AG04449 (cell line): ENCODE measurements at regions of chr17 and their contacts with region 1.

Region 1: DNA sequence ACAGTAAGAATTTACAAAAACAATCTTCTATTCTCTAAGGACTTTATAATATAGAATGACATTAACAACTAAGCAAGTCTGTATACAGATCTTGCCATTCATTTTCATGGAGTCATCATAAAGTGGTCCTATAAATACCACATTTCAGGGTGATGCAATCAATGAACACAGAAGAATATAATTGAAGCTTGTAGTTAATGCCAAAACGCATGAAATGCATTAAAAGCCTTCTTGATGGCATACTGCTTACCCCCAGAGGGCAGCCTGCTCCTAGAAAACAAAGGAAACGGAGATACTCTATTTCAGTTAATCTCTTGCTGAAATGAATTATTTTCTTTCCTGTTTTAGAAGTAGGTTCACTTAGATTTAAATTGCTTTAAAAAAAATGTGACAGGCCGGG is 45.2 kb upstream of the STAC2 start:
- DNase-seq: peak; percentile 69
- H3K4me3 ChIP-seq: no peak overlapping the region
- CTCF ChIP-seq: peak; percentile 56

Region 2: GRCh38 chr17:39099663-39100286 is 171.1 kb before region 1 on chr17:
- CTCF ChIA-PET with region 1: no interaction called
- POLR2A ChIA-PET with region 1: no interaction called
- DNase-seq: no peak
- H3K4me3 ChIP-seq: no peak overlapping the region
- CTCF ChIP-seq: no peak

Region 3: GRCh38 chr17:39144416-39144840 is 126.5 kb before region 1 on chr17:
- CTCF ChIA-PET with region 1: no interaction called
- POLR2A ChIA-PET with region 1: no interaction called
- DNase-seq: no peak
- H3K4me3 ChIP-seq: no peak overlapping the region
- CTCF ChIP-seq: no peak

Region 4: DNA sequence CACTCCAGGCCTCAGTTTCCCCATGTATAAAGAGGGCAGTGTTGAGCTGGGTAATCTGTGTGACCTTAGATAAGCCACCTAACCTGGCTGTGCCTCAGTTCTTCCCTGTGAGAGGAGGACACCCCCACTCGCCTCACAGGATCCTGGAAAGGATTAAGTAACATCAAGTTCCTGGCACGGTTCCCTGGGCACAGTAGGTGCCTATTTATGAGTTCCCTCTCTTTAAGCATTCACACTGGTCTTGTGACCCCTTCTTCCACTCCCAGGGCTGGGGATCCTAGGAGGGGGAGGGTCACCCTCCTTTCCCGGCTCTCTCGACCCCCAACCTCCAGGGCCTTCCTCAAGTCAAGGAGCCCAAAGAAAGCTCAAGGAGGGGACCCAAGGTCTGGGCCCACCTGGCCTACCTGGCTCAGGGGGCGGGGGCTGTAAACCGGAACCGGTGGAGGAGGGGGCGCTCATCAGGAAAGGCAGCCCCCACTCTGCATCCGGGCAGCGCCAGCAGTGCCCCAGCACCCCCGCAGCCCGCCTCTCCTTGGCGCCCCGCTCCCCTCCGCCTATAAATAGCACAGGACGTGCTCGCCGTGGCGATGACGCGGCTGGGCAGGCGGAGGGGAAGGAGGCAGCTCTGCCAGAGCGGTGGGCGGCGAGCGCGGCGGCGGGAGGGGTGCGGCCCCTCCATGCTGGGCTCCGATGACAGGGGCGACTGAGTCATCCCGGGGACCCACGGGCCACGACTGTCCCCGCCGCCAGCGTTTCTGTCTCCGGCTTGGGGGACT is 61.4 kb before region 1 on chr17:
- CTCF ChIA-PET with region 1: no interaction called
- POLR2A ChIA-PET with region 1: no interaction called
- DNase-seq: no peak
- H3K4me3 ChIP-seq: peak overlapping the region; percentile 51
- CTCF ChIP-seq: no peak

Region 5: DNA sequence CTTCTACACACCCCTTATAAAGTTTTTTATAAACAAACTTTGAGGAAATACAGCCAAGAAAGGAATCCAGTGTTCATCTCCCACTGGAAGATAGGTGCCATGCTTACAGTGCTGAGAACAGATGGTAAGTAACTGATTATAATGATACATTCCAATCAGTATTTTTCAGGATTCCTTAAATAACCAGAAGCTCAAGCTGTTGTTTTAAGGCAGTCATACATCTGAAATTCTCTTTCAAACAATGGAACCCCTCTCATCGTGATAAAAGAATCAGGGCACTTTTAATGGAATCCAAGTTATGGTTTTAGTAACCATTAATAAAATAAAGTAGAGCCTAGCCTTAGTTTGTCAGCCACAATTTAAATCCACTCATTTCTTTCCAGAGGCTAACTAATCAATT is 10.9 kb after region 1 on chr17:
- CTCF ChIA-PET with region 1: interaction called, 25 read pairs
- POLR2A ChIA-PET with region 1: no interaction called
- DNase-seq: peak; percentile 16
- H3K4me3 ChIP-seq: no peak overlapping the region
- CTCF ChIP-seq: no peak

Region 6: DNA sequence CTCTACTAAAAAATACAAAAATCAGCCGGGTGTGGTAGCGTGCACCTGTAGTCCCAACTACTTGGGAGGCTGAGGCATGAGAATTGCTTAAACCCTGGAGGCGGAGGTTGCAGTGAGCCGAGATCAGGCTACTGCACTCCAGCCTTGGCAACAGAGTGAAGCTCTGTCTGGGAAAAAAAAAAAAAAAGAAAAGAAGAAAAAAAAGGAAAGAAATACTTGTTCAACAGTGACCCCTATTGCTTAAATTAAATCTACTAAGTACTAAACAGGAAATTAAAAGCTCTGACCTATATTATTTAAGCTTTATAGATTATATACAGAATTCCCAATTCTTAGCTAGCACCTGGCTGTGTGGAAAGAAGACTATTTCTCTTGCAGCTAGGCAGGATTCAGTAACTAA is 81.6 kb after region 1 on chr17:
- CTCF ChIA-PET with region 1: interaction called, 18 read pairs
- POLR2A ChIA-PET with region 1: no interaction called
- DNase-seq: no peak
- H3K4me3 ChIP-seq: no peak overlapping the region
- CTCF ChIP-seq: no peak

Region 7: DNA sequence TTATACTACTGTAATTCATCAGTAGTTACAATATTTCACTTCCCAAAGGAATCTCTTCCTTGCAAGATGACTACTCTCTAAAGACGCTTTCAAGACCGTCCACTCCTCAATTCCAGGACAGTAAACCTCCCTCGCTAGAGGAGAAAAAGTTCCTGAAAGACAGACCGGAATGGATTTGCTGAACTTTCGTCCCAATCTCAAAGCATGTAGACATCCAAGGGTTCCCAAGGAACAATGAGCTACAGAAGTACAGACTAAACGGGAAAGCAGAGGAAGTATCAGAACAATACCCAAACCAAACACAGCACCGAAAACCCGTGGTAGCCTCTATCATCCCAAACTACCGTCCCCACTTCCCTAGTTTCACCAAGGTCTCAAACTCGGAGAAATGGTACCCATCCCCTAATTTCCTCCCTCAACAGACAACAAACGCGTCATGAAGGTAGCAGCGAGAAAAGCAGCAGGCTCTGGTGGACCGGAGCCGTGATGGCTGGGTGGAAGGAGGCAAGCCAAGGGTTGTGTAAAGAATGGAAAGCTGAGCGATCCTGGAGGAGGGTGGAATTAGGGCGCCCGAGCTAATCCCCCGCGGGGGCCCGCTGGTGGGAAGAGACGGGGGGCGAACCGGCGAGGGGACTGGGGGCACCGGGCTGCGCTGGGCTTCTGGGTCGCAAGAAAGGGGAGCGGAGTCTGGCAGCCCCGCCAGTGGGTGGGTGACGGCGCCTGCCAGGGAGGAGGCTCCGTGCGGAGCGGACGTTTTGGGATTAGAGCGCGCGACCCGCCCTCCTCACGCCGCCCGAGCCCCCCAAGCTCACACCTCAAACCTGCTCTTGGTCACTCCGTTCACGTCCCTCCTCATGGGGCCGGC is 129.9 kb after region 1 on chr17:
- CTCF ChIA-PET with region 1: interaction called, 29 read pairs
- POLR2A ChIA-PET with region 1: interaction called, 3 read pairs
- DNase-seq: no peak
- H3K4me3 ChIP-seq: peak overlapping the region; percentile 84
- CTCF ChIP-seq: no peak

Region 8: GRCh38 chr17:39461113-39461925 is 190.4 kb after region 1 on chr17 and contains the start of gene CDK12:
- CTCF ChIA-PET with region 1: interaction called, 11 read pairs
- POLR2A ChIA-PET with region 1: interaction called, 4 read pairs
- DNase-seq: peak; percentile 94
- H3K4me3 ChIP-seq: peak within 1 kb of the TSS; percentile 98
- CTCF ChIP-seq: no peak